ENCODE measurements at regions of chr2 and their contacts with region 1.

Region 1: DNA sequence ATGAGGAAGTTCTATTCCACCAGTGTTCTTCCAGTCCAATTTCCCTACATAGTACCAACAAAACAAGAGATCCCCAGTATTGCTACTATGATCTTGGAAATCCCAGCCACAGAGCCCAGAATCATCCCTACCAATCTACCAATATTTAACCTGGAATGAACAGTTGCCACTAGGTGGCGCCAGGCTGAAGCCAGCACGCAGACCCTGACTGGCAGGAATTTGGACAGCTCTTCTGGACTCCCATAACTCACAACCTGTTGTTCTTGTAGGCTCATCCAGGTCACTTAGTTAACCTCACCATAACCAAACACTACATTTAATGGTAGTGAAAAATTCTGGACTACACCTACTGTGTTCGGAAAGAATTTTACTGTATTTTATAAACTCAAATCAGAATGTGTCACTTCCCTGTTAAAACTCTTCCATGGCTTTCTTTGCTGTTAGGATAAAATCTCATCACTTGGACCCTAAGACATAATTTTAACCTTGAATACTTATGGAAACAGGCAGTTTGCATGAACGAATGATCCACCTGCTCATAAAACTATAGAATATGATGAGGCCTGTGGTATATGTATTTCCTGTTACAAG is 59.8 kb upstream of the SLC38A11 start:
- DNase-seq: peak; percentile 85
- H3K4me3 Mint-ChIP-seq: no peak overlapping the region
- H3K27ac Mint-ChIP-seq: no peak overlapping the region
- H3K4me1 Mint-ChIP-seq: no peaks in the 10 kb centered on the region
- H3K27me3 Mint-ChIP-seq: peaks cover 4% of the 10 kb centered on the region

Region 2: DNA sequence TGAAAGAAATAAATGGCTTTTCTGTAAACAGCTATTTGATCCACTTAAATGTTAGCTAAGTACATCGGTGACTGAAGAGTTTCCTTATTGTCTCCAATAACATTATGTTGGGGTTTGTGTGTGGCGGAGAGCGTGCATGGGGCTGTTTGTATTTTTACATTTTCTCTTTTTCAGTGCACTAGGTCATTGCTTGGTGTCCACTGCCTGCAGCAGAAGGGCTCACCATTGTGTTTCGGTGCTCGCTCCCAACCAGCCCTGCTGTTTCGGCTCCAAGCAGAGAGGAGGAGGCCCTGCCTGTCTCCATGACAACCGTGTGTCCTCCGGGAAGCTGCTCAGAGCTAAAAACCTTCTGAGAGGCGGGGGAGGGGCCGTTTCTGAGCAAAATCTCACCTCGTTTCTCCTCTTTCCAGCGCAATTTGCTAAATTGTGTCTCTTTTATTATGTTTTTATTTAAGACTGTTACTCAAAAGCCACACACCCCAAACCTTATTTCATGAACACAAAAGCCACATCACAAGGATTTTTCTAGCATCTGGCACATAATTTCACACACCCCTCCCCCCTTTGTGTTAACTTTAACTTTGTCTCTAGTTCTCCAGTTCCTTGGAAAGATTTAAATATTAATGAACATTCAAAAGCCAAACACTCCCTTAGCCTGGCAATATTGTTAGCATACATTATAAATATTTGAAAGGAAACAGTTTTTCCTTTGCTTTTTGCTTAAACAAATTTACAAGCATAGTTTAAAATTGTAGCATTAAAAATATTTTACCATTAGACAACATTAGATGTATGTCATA is 53.0 kb after region 1 on chr2:
- intact Hi-C with region 1: no loop called
- DNase-seq: no peak
- H3K4me3 Mint-ChIP-seq: no peak overlapping the region
- H3K27ac Mint-ChIP-seq: no peak overlapping the region
- H3K4me1 Mint-ChIP-seq: no peaks in the 10 kb centered on the region
- H3K27me3 Mint-ChIP-seq: peaks cover 2% of the 10 kb centered on the region

Region 3: DNA sequence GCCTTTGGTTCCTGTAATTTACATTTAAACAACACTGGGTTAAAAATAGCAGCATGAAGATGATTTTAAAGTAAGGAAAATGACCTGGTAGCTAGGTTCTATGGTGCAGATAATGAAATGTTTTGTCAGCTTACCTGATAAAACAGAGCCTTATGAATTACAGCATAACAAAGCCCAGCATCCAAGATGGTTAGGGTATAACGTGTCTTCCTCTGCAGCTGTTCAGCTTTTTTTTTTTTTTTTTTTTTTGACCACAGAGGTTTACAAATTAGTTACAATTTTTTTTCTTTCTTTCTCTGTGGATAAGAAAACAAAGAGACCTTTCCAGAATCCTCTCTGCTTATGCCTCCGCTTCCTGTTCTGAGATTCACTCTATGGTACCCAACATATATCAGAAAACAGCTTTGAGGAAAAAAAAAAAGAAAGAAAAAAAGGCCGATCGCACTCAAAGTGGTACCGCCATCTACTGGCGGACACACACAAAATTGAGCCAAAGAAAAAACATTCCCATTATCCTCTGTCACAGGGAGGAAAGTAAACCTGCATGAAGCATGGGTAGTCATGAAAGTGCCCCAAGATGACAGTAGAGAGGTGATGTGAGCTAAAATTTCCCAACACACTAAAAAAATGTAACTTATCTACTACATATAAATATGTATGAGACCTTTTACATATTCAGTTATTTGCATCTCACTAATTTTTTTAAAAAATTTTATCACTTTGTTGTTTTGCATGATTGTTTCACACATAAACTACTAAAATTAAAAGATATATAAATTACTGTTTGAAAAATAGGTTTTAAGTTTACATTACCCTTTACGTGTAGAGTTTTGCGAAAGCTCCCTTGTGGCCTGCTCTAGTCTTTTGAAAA is 188.8 kb after region 1 on chr2 and contains the start of gene SCN3A:
- intact Hi-C with region 1: loop called (anchors 1 kb)
- DNase-seq: peak; percentile 63
- H3K4me3 Mint-ChIP-seq: peak within 1 kb of the TSS; percentile 27
- H3K27ac Mint-ChIP-seq: no peak within 1 kb of the TSS
- H3K4me1 Mint-ChIP-seq: peaks cover 2% of the 10 kb centered on the region
- H3K27me3 Mint-ChIP-seq: peaks cover 5% of the 10 kb centered on the region
- total RNA-seq, gene SCN3A: 0.05 TPM in 1 of 2 replicates, not detected in the other

Measured in activated CD4-positive, alpha-beta T cell treated with anti-CD3 and anti-CD28 coated beads, Interleukin-2, amount 10 ng/mL, durations not matched to agents 24 days and 14 days (primary cell).